ENCODE measurements at regions of chr2 and their contacts with region 1.

Region 1: GRCh38 chr2:37877457-37878315 is 47.4 kb upstream of the RMDN2 start:
- DNase-seq: peak in 1 of 10 donors; percentile 20

Region 2: DNA sequence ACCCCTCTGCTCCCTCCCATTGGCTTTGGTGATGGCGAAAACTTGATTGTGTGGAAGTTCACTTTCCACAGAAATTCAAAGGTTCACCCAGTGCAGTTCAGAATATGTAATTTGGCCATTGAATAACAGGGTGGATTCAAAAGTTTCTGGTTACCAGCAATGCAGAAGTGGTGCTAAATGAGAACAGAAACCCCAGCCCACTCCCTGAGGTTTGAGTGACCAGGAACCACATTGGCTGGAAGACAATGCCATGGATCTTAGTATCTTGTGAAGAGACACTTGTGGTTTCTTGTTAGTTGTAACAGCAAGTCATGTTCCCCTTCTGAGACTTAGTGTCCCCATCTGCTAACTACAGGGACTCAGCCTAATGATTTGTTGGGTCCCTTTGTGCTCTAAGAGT is 483.4 kb before region 1 on chr2:
- intact Hi-C with region 1: loop called (anchors 5 kb)
- DNase-seq: no peak

Region 3: DNA sequence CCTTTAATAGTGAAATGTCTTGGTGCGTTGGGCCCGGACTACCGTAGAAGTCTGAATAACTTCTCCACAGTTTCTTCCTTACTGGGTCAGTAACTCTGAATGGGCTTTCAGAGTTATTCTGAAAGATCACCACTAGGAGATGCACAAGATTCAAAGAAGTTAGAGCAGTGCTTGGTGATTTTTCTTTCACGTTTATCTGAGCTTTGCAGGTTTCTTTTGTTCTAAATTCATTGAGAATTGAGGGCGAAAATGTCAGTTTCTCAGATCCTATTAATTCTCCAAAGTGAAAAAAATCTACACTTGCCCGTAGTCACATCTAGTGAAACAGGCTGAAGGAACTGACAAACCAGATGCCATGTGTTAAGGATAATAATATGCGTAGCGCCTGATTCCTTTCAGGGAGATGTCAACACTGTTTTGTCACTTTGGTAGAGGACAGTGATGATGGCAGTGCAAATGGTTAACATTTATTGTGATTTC is 463.2 kb before region 1 on chr2:
- intact Hi-C with region 1: loop called (anchors 5 kb)
- DNase-seq: no peak

Region 4: GRCh38 chr2:37832590-37833197 is 45.0 kb before region 1 on chr2:
- intact Hi-C with region 1: loop called (anchors 1 kb)
- DNase-seq: peak; percentile 55 to 96 (median 90)

Region 5: GRCh38 chr2:37997629-37998028 is 119.9 kb after region 1 on chr2:
- intact Hi-C with region 1: no loop called
- DNase-seq: no peak

Region 6: GRCh38 chr2:38308821-38309220 is 431.1 kb after region 1 on chr2:
- intact Hi-C with region 1: no loop called
- DNase-seq: no peak

Region 7: DNA sequence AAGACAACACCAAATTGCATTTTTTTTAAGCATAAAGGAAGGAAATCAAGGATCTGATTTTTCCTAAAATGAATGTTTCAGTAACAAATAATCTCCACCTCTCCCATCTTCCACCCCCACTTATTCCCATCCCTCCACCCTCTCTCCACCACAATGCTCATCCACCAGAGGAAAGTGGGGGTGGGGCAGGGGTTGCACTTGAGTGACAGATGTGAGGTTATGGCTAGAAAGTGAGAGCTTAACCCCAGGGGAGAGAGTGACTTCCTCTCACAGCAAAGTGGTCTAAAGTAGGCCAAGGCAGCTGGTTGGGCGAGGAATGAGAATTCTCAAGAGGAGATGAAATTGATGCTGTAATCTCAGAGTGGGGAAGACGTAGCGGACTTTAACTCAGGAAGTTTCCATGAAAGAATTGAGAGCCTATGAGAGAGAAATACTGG is 620.4 kb after region 1 on chr2:
- intact Hi-C with region 1: no loop called
- DNase-seq: no peak

Measured in posterior cingulate gyrus (tissue), 11 donors.